ENCODE measurements at regions of chr14 and their contacts with region 1.

Region 1: GRCh38 chr14:71883094-71883766 is 49.0 kb upstream of the RGS6 start:
- DNase-seq: no peak
- H3K4me3 ChIP-seq: no peak overlapping the region
- H3K27ac ChIP-seq: no peak overlapping the region
- H3K4me1 ChIP-seq: no peaks in the 10 kb centered on the region
- H3K27me3 ChIP-seq: no peaks in the 10 kb centered on the region
- CTCF ChIP-seq: no peak
- EP300 ChIP-seq: no peak
- POLR2A ChIP-seq: no peak

Region 2: DNA sequence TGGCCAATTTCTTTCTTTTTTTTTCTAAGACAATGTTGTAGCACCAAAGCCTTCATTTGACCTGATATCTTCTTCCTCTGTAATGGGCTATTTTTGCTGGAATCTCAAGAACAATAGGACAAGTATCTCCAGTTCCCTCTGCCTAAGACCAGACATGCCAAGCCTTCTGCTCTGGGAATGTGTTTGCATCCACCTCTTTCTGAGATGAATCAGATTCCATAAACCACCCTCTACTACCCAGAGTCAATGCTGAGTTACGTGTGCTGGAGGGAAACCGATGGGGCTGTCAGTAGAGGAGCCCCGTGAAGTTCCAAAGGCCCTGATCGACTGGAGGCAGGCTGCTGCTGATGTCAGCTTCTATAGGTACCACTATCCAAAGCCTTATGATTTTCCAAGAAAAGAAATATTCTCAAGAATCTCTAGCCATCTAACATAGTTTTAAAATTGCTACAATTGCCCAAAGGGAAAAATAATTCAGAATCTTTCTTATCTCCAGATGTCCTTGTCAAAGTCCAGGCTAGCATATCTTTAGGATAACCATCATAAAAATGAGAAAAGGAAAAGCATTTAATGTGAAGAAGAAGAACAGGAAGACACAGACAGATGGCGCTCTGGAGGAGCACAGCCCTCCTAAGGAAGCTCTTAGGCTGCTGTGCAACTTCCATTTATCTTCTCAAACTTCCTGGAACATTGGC is 1796.4 kb before region 1 on chr14:
- intact Hi-C with region 1: no loop called
- DNase-seq: no peak
- H3K4me3 ChIP-seq: no peak overlapping the region
- H3K27ac ChIP-seq: no peak overlapping the region
- H3K4me1 ChIP-seq: no peaks in the 10 kb centered on the region
- H3K27me3 ChIP-seq: no peaks in the 10 kb centered on the region
- CTCF ChIP-seq: no peak
- EP300 ChIP-seq: no peak
- POLR2A ChIP-seq: no peak

Region 3: GRCh38 chr14:71905860-71906259 is 22.6 kb after region 1 on chr14:
- intact Hi-C with region 1: loop called in 1 of 4 experiments (anchors 2 kb)
- DNase-seq: no peak
- H3K4me3 ChIP-seq: no peak overlapping the region
- H3K27ac ChIP-seq: no peak overlapping the region
- H3K4me1 ChIP-seq: peaks cover 1% of the 10 kb centered on the region
- H3K27me3 ChIP-seq: no peaks in the 10 kb centered on the region
- CTCF ChIP-seq: no peak
- EP300 ChIP-seq: no peak
- POLR2A ChIP-seq: no peak

Region 4: DNA sequence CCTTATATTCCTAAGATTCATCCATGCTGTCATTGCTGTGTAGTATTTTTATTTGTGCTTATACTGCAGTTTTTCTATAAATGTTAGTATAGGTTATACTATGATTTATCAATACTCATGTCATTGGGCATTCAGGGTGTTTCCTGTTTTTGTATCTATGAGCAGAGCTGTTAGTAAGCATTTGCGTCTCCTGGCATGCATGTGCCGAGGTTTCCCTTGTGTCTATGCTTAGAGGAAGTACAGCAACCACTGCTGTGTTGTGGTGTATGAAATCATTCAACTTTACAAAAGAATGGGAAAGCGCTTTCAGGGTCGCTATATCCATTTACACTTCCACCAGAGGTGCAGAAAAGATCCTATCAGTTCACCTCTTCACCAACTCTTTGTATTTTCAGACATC is 171.7 kb after region 1 on chr14:
- intact Hi-C with region 1: no loop called
- DNase-seq: no peak
- H3K4me3 ChIP-seq: no peak overlapping the region
- H3K27ac ChIP-seq: no peak overlapping the region
- H3K4me1 ChIP-seq: no peaks in the 10 kb centered on the region
- H3K27me3 ChIP-seq: no peaks in the 10 kb centered on the region
- CTCF ChIP-seq: no peak
- EP300 ChIP-seq: no peak
- POLR2A ChIP-seq: no peak

Region 5: DNA sequence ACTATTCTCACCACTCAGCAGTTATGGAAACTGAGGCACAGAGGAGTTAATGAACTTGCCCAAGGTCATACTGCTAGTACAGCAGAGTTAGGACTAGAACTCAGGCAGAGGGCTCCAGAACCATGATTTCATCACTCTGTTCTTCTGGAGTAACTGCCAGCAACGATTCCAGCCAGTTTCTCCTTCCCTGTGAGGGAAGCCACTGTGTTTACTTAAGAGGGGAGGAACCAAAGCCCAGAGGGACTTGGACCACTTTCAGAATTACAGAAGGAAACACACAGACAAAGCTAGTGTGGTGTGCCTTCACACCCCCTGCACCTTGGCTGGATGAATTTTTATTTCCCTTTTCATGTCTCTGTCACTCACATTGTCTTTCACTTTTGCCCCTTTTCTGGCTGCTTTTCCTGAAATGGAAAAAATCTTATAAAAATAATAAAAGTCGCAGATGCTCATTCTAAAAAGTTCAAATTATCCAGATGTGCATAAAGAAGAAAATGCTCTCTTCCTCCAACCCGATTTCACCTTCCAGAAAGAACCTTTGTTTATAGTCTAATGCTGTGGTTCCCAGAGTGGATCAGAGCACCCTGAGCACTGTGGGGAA is 612.5 kb after region 1 on chr14:
- intact Hi-C with region 1: no loop called
- DNase-seq: no peak
- H3K4me3 ChIP-seq: no peak overlapping the region
- H3K27ac ChIP-seq: no peak overlapping the region
- H3K4me1 ChIP-seq: no peaks in the 10 kb centered on the region
- H3K27me3 ChIP-seq: no peaks in the 10 kb centered on the region
- CTCF ChIP-seq: no peak
- EP300 ChIP-seq: no peak
- POLR2A ChIP-seq: no peak